H1 (cell line): ENCODE measurements at regions of chr5 and their contacts with region 1.

Region 1: GRCh38 chr5:149667084-149667828 is 62.9 kb upstream of the PPARGC1B start:
- DNase-seq: peak in 1 of 2 experiments; percentile 77
- H3K4me3 ChIP-seq: no peak overlapping the region
- H3K27ac ChIP-seq: no peak overlapping the region
- H3K4me1 ChIP-seq: no peaks in the 10 kb centered on the region
- H3K27me3 ChIP-seq: no peaks in the 10 kb centered on the region
- CTCF ChIP-seq: peak; percentile 62 to 87 (median 73)
- EP300 ChIP-seq: no peak
- POLR2A ChIP-seq: no peak
- RAD21 ChIP-seq: peak; percentile 64 to 77

Region 2: DNA sequence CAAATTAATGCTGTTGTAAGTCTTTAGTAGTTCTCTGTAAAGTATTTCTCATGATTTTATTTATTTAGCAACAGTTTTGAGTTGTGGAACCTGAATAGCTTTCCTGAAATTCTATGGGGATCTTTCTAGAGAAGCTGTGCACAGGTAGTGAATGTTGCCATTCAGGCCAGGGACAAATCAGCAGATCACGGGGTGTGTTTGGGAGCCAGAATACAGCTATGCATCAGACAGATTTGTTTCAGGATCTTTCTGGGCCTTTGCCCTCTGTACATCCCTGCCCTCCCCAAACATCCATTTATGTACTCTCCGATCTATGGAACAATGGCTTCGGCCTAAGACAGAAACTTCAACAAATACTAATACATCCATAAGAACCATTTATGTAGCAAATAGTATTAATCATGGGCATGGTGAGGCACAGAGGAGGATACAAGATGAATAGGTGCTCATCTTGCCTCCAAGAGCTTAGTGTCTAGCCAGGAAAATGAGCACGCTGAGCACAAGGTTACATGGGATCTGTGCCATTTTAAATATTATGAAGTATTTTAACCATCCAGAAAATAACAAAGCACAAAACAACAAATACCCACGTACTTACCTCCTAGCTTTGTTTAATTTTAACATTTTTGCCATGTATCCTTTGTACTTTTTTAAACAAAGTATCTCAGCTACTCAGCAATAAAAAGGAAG is 72.9 kb before region 1 on chr5:
- CTCF ChIA-PET with region 1: no interaction called
- POLR2A ChIA-PET with region 1: no interaction called
- DNase-seq: no peak
- H3K4me3 ChIP-seq: no peak overlapping the region
- H3K27ac ChIP-seq: no peak overlapping the region
- H3K4me1 ChIP-seq: peaks cover 0 to 3% (median 0%) of the 10 kb centered on the region in 4 experiments; a peak in 2 of 7 replicates
- H3K27me3 ChIP-seq: no peaks in the 10 kb centered on the region
- CTCF ChIP-seq: no peak
- EP300 ChIP-seq: no peak
- POLR2A ChIP-seq: no peak
- RAD21 ChIP-seq: no peak

Region 3: GRCh38 chr5:149636851-149637246 is 30.4 kb before region 1 on chr5:
- CTCF ChIA-PET with region 1: interaction called, 20 read pairs
- POLR2A ChIA-PET with region 1: no interaction called
- DNase-seq: peak; percentile 49 to 83
- H3K4me3 ChIP-seq: no peak overlapping the region
- H3K27ac ChIP-seq: no peak overlapping the region
- H3K4me1 ChIP-seq: peaks cover 12 to 16% (median 12%) of the 10 kb centered on the region in 4 experiments
- H3K27me3 ChIP-seq: no peaks in the 10 kb centered on the region; a peak in 1 of 7 replicates
- CTCF ChIP-seq: peak; percentile 85 to 93 (median 91)
- EP300 ChIP-seq: no peak
- POLR2A ChIP-seq: no peak
- RAD21 ChIP-seq: peak; percentile 97 to 98

Region 4: DNA sequence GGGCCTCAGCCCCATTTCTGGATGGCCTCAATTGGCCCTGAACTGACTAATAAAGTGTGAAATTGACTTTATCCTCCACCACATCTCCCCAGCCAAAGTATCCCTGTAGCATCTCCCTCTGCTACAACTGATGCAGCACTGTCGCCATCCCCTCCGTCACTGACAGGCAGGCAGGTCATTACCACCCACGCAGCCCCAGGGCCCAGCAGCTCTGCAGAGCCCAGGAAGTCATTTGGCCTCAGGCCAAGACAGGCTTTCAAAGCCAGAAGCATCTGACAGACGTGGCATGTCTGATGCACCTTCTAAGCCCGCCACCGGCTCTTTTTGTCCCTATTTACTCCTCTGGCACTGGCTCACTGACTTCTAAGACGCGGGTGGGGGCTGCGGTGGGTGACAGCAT is 20.7 kb before region 1 on chr5:
- CTCF ChIA-PET with region 1: interaction called, 16 read pairs
- POLR2A ChIA-PET with region 1: no interaction called
- DNase-seq: no peak
- H3K4me3 ChIP-seq: no peak overlapping the region
- H3K27ac ChIP-seq: no peak overlapping the region
- H3K4me1 ChIP-seq: no peaks in the 10 kb centered on the region
- H3K27me3 ChIP-seq: no peaks in the 10 kb centered on the region
- CTCF ChIP-seq: no peak
- EP300 ChIP-seq: no peak
- POLR2A ChIP-seq: no peak
- RAD21 ChIP-seq: no peak

Region 5: GRCh38 chr5:149656576-149657182 is 10.6 kb before region 1 on chr5:
- CTCF ChIA-PET with region 1: interaction called, 33 read pairs
- POLR2A ChIA-PET with region 1: no interaction called
- DNase-seq: peak; percentile 56 to 95
- H3K4me3 ChIP-seq: no peak overlapping the region
- H3K27ac ChIP-seq: no peak overlapping the region
- H3K4me1 ChIP-seq: no peaks in the 10 kb centered on the region; a peak in 1 of 7 replicates
- H3K27me3 ChIP-seq: no peaks in the 10 kb centered on the region; a peak in 1 of 7 replicates
- CTCF ChIP-seq: peak; percentile 64 to 94 (median 91)
- EP300 ChIP-seq: no peak
- POLR2A ChIP-seq: no peak
- RAD21 ChIP-seq: peak; percentile 80 to 88

Region 6: GRCh38 chr5:149679876-149680809 is 12.9 kb after region 1 on chr5:
- CTCF ChIA-PET with region 1: interaction called, 19 read pairs
- POLR2A ChIA-PET with region 1: no interaction called
- DNase-seq: no peak
- H3K4me3 ChIP-seq: no peak overlapping the region
- H3K27ac ChIP-seq: no peak overlapping the region
- H3K4me1 ChIP-seq: no peaks in the 10 kb centered on the region; a peak in 1 of 7 replicates
- H3K27me3 ChIP-seq: no peaks in the 10 kb centered on the region
- CTCF ChIP-seq: no peak
- EP300 ChIP-seq: no peak
- POLR2A ChIP-seq: no peak
- RAD21 ChIP-seq: no peak

Region 7: DNA sequence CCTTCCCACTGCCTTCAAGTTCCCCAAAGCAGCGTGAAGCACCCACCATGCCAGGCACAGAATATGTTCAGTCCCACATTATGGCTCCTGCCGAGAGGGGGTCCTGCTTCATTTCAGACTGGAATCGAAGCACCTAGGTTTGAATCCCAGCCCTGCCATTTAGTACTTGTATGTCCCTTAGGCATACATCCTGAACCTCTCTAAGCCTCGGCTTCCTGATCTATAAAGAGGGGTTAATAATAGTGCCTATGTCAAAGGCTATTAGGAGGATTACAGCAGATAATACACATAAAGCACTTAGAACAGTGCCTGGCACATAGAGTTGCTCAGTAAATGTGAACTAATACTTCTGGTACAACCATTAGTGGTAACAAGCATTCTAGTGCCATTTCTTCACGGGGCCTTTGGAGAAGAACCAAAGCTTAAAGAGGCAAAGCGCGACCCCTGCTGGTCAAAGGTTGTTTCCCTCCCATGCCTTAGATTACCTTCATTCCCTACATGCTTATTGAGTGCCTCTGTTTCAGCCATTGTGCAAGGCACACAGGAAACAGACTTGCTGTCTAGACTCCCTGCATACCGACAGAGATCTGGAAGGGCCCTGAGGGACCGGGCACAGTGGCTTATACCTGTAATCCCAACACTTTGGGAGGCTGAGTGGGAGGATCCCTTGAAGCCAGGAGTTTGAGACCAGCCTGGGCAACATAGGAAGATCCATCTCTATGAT is 161.1 kb after region 1 on chr5:
- CTCF ChIA-PET with region 1: interaction called, 47 read pairs
- POLR2A ChIA-PET with region 1: no interaction called
- DNase-seq: peak; percentile 73 to 94
- H3K4me3 ChIP-seq: no peak overlapping the region
- H3K27ac ChIP-seq: no peak overlapping the region
- H3K4me1 ChIP-seq: no peaks in the 10 kb centered on the region
- H3K27me3 ChIP-seq: no peaks in the 10 kb centered on the region
- CTCF ChIP-seq: peak; percentile 54 to 96 (median 88)
- EP300 ChIP-seq: no peak
- POLR2A ChIP-seq: no peak
- RAD21 ChIP-seq: peak; percentile 92 to 94

Region 8: GRCh38 chr5:149881069-149881622 is 213.9 kb after region 1 on chr5:
- CTCF ChIA-PET with region 1: no interaction called
- POLR2A ChIA-PET with region 1: no interaction called
- DNase-seq: no peak
- H3K4me3 ChIP-seq: no peak overlapping the region
- H3K27ac ChIP-seq: no peak overlapping the region
- H3K4me1 ChIP-seq: no peaks in the 10 kb centered on the region
- H3K27me3 ChIP-seq: no peaks in the 10 kb centered on the region
- CTCF ChIP-seq: no peak
- EP300 ChIP-seq: no peak
- POLR2A ChIP-seq: no peak
- RAD21 ChIP-seq: no peak

Region 9: DNA sequence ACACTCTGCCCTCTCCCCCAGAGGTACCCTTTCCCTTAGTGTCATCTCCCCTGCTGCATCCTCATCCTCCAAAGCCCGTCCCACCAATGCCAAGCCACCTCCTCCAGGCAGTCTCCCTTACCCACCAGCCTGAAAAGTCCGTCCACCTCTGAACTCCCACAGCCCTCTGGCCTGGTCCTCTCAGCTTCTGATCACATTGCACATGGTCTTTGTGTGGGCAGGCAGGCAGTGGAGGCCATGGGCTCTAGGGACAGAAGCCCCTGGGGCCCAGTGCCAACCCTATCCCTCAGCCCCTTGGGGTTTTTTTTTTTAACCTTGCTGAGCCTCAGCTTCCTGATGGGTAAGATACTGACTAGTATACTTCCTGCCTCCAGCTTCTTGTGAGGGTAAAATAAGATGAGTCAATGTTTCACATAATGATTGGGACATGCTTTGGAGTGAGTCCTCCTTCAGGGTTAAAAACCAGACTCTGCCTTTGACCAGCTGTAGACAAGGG is 399.7 kb after region 1 on chr5:
- CTCF ChIA-PET with region 1: no interaction called
- POLR2A ChIA-PET with region 1: no interaction called
- DNase-seq: no peak
- H3K4me3 ChIP-seq: no peak overlapping the region
- H3K27ac ChIP-seq: no peak overlapping the region
- H3K4me1 ChIP-seq: peaks cover 0 to 18% (median 4%) of the 10 kb centered on the region in 4 experiments; a peak in 5 of 7 replicates
- H3K27me3 ChIP-seq: no peaks in the 10 kb centered on the region; a peak in 1 of 7 replicates
- CTCF ChIP-seq: no peak
- EP300 ChIP-seq: no peak
- POLR2A ChIP-seq: no peak
- RAD21 ChIP-seq: no peak